ENCODE measurements at regions of chr1 and their contacts with region 1.

Region 1: GRCh38 chr1:29047142-29047541 is 76.6 kb downstream of the TMEM200B start:
- DNase-seq: no peak
- H3K4me3 ChIP-seq: no peak overlapping the region
- H3K27ac ChIP-seq: no peak overlapping the region
- H3K4me1 ChIP-seq: peaks cover 0 to 34% (median 10%) of the 10 kb centered on the region in 4 donors
- H3K27me3 ChIP-seq: no peaks in the 10 kb centered on the region
- CTCF ChIP-seq: no peak

Region 2: DNA sequence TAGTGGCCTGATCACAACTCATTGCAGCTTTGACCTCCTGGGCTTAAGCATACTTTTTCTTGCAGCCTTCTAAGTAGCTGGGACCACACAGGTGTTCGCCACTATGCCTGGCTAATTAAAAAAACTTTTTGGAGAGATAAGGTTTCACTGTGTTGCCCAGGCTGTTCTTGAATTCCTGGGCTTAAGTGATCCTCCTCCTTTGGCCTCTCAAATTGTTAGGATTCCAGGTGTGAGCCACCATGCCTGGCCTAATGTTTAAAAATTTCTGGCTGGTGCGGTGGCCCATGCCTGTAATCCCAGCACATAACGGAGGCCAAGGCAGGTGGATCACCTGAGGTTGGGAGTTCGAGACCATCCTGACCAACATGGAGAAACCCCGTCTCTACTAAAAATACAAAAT is 286.0 kb before region 1 on chr1:
- intact Hi-C with region 1: no loop called
- DNase-seq: no peak
- H3K4me3 ChIP-seq: no peak overlapping the region
- H3K27ac ChIP-seq: no peak overlapping the region
- H3K4me1 ChIP-seq: peaks cover 0 to 22% (median 9%) of the 10 kb centered on the region in 4 donors
- H3K27me3 ChIP-seq: no peaks in the 10 kb centered on the region
- CTCF ChIP-seq: no peak

Region 3: DNA sequence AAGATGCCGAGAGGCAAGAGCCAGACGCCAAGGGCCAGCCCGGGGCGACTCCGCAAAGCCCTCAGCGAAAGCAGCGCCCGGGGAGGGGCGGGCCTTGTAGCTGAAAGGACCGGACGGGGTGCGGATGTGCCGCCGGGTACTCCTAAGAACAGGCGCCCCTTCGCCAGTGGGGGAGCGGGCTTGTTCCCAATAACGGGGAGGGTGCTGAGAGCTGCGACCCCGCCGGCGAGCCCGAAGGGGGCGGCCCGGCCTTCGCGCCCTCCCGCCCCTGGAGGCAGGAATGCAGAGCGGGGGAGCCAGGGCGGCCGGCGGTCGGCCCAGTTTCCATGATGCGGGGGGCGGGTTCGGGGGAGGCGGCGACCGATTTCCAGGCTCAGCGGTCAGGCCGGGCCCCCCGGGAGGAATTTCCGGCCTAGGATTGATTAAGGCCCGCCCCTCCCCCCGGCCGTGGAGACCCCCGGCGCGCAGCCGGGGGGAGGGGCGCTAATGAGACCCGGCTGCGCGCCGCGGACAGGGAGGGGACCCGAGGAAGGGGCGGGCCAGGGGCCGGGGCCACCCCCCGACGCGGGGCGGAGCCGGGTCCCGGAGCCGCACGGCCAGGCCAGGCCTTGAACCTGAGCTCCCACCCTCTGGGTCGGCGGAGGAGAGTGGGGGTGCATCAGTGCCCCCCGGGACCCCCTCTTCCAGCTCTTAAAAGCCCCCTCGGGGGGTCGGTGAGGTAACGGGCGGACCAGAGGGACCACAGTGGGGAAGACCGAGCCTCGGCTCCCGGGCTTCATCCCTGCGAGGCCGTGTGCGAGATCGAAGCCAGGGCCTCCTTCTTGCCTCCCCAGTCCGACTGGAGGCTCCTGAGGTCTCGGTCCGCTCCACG is 77.5 kb after region 1 on chr1:
- intact Hi-C with region 1: no loop called
- DNase-seq: peak; percentile 74 to 91
- H3K4me3 ChIP-seq: peak overlapping the region; percentile 78 to 85
- H3K27ac ChIP-seq: peak overlapping the region; percentile 96 to 100
- H3K4me1 ChIP-seq: peaks cover 0 to 43% (median 27%) of the 10 kb centered on the region in 4 donors
- H3K27me3 ChIP-seq: no peaks in the 10 kb centered on the region
- CTCF ChIP-seq: peak; percentile 92 to 99

Region 4: DNA sequence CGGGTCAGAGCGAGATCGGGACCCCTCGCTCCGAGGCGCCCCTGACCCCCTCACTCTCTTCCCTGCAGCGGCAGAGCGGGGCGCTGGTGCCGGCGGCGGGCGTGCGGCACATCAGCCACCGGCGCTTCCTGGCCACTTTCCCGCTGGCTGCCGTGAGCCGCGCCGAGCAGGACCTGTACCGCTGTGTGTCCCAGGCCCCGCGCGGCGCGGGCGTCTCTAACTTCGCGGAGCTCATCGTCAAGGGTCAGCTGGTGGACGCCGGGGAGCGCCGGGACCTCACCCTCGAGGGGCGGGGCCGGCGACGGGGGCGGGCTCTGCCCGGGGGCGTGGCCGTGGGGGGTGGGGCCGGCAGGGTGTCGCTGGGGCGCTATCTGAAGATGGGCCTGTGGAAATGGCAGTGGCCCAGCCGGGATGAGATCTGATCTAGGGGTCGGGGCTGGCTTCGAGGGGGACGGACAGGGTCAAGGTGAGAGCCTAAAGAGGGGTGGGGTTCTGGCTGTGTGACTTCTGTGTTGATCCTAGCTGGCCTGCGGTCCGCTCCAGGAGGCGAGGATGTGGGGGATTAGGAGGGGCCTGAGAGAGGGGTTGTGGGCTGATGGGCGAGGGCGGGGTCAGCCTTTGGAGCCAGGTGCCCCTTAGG is 212.8 kb after region 1 on chr1:
- intact Hi-C with region 1: loop called (anchors 5 kb)
- DNase-seq: peak in 1 of 2 donors; percentile 69
- H3K4me3 ChIP-seq: peak overlapping the region; percentile 45 to 54
- H3K27ac ChIP-seq: no peak overlapping the region
- H3K4me1 ChIP-seq: peaks cover 0 to 26% (median 20%) of the 10 kb centered on the region in 4 donors
- H3K27me3 ChIP-seq: no peaks in the 10 kb centered on the region
- CTCF ChIP-seq: no peak